ENCODE measurements at regions of chr12 and their contacts with region 1.

Region 1: DNA sequence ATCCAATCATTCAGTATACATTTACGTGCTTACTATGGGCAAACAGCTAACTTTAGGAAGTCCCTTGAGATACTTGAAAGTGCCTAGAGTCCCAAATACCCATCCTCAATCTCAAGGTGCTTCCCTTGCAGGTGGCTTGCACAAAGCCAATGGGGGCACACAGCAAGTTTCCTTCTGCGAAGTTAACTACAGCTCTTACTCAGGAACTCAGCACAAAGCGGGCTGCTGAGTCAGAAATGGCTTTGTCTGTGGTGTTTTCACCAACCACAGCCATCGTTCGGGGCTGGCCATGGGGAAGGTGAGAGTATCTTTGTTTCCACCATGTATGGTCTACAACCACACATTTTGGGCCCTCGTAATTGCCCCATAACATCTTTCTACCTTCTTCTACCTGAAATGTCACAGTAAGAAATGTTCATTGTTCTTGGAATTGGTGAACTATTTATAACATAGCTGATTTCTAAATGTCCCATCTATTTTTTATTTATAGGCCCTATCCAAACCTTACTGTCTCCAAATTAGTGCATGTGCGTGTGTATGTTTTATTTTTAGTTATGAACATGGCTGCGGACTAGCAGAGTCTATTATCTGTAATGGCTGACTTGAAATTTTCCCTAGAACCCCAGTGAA is 13.9 kb downstream of the MFAP5 start:
- DNase-seq: no peak
- H3K4me3 ChIP-seq: no peak overlapping the region
- H3K27ac ChIP-seq: no peak overlapping the region
- H3K4me1 ChIP-seq: no peaks in the 10 kb centered on the region; a peak in 2 of 7 replicates
- H3K27me3 ChIP-seq: no peaks in the 10 kb centered on the region
- CTCF ChIP-seq: no peak
- EP300 ChIP-seq: no peak
- POLR2A ChIP-seq: no peak
- RAD21 ChIP-seq: no peak

Region 2: GRCh38 chr12:8590842-8591550 is 57.7 kb before region 1 on chr12:
- CTCF ChIA-PET with region 1: interaction called, 10 read pairs
- POLR2A ChIA-PET with region 1: no interaction called
- DNase-seq: no peak
- H3K4me3 ChIP-seq: no peak overlapping the region
- H3K27ac ChIP-seq: no peak overlapping the region
- H3K4me1 ChIP-seq: no peaks in the 10 kb centered on the region
- H3K27me3 ChIP-seq: no peaks in the 10 kb centered on the region
- CTCF ChIP-seq: peak in 2 of 3 experiments; percentile 21 to 33; a peak in 2 of 4 replicates
- EP300 ChIP-seq: no peak
- POLR2A ChIP-seq: no peak
- RAD21 ChIP-seq: no peak; a peak in 1 of 4 replicates

Region 3: DNA sequence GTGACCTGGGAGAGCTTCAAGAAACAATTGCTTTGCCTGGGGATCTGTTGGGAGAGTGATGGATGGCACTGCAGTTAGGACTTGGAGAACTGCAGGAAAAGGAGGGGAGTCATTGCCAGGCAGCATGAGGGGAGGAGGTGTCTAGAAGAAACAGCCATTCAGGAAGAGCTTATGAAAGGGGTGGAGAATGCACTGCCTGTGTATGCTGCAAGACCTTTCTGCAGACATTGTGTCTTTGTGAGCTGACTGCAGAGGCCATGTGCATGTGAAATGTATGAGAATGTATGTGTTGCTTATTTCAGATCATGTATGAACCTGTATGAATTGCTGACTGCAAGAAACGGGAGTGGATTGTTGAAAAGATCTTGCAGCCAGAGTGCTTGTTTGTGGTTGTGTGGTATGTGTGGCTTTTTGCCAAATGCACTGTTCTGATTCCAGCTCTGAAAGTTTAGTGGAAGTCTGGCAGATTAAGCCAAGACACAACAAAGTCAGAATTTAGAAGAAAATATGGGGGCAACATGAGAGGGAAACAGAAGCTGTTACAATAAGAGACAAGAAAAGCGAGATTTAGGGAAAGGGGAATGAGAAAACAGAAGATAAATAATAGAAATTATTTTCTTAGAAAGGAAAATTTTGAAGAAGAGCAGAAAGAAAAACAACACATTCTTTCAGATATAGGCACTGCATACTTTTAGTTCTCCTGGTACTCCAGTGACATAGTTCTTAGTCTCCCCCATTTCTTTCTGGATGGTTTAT is 39.3 kb after region 1 on chr12:
- CTCF ChIA-PET with region 1: no interaction called
- POLR2A ChIA-PET with region 1: no interaction called
- DNase-seq: no peak
- H3K4me3 ChIP-seq: no peak overlapping the region
- H3K27ac ChIP-seq: peak overlapping the region; percentile 25; the same call in 1 of the 2 replicates
- H3K4me1 ChIP-seq: peaks cover 2 to 14% (median 12%) of the 10 kb centered on the region in 4 experiments; a peak in 6 of 7 replicates
- H3K27me3 ChIP-seq: no peaks in the 10 kb centered on the region
- CTCF ChIP-seq: no peak
- EP300 ChIP-seq: peak in 1 of 2 experiments; percentile 49; a peak in 1 of 3 replicates
- POLR2A ChIP-seq: no peak
- RAD21 ChIP-seq: no peak

Measured in H1 (cell line).